ENCODE measurements at regions of chr22 and their contacts with region 1.

Region 1: GRCh38 chr22:18024276-18024947 is at the start of gene MICAL3:
- DNase-seq: peak; percentile 24 to 90 (median 81)

Region 2: DNA sequence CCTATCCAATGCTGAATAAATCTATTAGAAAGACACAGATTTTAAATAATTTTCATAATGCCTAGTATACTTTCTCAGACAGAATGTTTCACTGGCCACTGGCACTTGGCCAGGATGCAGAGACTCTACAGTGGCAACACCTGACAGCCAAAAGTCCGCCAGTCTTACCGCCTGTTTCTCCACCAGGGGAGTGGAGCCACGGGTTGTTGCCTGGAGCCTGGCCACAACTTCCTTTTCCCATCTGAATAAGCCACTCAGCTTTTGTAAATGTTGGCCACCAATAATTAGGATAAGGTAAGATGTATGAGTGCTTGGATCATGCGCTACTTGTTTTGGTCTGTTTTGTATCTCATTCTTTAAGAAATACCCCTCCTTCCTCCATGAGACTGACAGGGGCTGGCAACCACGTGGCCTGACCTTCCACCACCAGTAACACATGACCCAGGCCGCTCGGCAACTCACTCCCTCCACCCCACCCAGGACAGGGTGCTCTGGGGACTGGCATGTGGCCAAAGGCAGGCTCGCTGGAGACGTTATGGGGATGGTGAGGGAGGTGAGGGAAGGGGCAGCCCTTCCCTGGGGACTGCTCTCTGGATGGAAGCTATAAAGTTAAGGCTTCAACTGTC is 157.1 kb before region 1 on chr22:
- intact Hi-C with region 1: loop called (anchors 10 kb)
- DNase-seq: peak in 31 of 42 donors; percentile 34 to 85 (median 57)

Region 3: DNA sequence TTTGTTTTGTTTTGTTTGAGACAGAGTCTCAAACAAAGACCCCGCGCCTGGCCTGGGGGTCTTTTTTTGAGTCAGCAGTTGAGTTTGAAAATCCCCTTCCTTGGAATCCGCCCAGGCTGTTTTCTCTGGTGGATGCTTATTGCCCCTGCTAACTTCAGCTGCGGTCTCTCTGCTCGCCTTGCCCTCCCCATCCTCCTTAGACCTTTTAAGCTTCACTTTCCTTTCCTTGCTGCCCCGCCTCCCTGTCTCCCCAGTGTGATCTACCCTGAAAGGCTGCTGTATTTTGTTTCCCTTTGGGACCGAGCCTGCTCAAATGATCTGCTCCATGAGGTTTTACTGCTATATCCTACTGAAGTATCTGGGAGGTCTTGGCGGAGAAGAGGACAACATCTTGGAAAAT is 128.1 kb after region 1 on chr22:
- intact Hi-C with region 1: no loop called
- DNase-seq: no peak

Measured in head of caudate nucleus (tissue), 42 donors.